Activated CD4-positive, alpha-beta T cell treated with anti-CD3 and anti-CD28 coated beads, Interleukin-2, amount 10 ng/mL, durations not matched to agents 7 days and 5 days (primary cell): ENCODE measurements at regions of chr19 and their contacts with region 1.

Region 1: DNA sequence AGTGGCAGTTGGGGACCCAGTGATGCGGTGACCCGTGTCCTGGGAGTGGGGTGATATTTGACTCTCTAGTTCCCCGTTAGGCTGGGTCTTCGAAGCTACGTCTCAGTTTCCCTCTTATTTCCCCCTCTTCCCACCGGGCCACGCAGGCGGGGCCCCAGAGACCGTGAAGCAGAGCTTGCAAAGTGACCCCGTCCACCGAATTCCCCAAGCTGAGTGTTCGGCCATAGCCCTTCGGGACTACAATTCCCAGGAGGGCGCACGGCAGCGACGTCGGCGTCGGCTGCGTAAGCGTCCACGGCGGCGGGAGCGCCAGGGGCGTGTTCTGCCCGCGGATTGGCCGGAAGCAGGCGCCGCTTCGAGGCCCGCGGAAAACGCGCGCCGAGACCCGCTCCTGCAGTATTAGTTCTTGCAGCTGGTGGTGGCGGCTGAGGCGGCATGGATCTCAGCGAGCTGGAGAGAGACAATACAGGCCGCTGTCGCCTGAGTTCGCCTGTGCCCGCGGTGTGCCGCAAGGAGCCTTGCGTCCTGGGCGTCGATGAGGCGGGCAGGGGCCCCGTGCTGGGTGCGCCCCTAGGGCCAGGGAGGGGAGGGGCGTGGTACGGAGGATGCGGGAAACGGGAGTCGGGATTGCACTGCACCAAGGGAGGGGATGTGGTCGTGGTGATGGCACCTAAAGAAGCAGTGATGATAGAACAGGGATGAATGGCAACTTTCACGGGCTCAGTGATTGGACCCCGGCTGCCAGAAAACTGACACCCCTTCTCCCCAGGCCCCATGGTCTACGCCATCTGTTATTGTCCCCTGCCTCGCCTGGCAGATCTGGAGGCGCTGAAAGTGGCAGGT is at the start of gene RNASEH2A:
- DNase-seq: peak; percentile 90
- H3K4me3 Mint-ChIP-seq: peak within 1 kb of the TSS; percentile 94
- H3K27ac Mint-ChIP-seq: peak within 1 kb of the TSS; percentile 93
- H3K4me1 Mint-ChIP-seq: peaks cover 27% of the 10 kb centered on the region
- H3K27me3 Mint-ChIP-seq: no peaks in the 10 kb centered on the region
- total RNA-seq, gene RNASEH2A: 34.9 to 39.3 TPM

Region 2: DNA sequence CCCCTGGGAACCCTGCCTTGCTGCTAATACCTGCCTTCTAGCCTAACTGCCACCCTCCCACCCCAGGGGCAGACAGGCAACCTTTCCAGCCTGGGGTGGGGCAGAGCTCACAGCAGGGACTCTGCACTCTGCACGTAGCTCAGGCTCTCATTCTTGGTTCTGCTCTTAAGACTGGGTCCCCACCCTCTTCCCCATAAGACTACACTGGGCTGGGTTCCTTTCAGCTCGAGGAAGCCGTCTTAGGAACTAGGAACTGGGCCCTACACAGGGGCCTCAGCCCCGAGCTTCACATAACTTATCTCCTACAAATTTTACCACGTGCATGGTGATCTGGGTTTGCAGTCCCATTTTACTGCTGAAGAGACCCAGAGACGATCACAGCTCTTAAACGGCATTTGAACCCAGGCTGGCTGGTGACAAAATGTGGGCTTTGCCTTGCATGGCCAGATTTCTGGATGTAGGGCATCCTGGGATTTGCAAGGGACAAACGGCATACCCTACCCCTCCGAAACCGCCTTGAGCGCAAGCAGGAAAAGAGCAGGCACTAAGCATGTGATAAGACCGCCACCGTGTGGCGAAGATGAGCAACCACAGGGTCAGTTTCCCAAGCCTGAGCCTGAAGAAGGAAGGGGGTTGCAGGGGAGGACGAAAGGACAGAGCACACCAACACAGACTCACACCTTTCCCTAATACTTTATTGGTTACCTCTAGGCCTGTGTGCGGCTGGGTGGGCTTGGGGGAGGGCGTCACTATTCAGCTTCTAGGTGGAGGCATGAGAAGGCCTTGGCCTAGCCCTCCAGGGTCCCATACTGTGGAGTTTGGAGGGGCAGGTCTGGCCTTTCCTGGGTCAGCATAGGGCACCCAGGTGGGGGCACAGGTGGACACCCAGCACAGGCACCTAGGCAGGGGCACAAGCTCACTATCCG is 10.1 kb before region 1 on chr19:
- CTCF ChIA-PET with region 1: interaction called, 11 read pairs
- POLR2A ChIA-PET with region 1: interaction called, 3 read pairs
- DNase-seq: peak; percentile 82
- H3K4me3 Mint-ChIP-seq: peak overlapping the region; percentile 54
- H3K27ac Mint-ChIP-seq: peak overlapping the region; percentile 85
- H3K4me1 Mint-ChIP-seq: peaks cover 40% of the 10 kb centered on the region
- H3K27me3 Mint-ChIP-seq: no peaks in the 10 kb centered on the region